ENCODE measurements at regions of chr1 and their contacts with region 1.

Region 1: GRCh38 chr1:247156787-247157232 is 15.0 kb downstream of the ZNF124 start:
- DNase-seq: no peak
- ATAC-seq: no peak
- H3K4me3 ChIP-seq: no peak overlapping the region
- H3K27ac ChIP-seq: no peak overlapping the region
- H3K4me1 ChIP-seq: no peaks in the 10 kb centered on the region
- H3K27me3 ChIP-seq: no peaks in the 10 kb centered on the region
- CTCF ChIP-seq: no peak
- POLR2A ChIP-seq: no peak
- RAD21 ChIP-seq: no peak

Region 2: GRCh38 chr1:246893191-246893939 is 263.4 kb before region 1 on chr1:
- CTCF ChIA-PET with region 1: no interaction called
- POLR2A ChIA-PET with region 1: no interaction called
- RAD21 ChIA-PET with region 1: no interaction called
- intact Hi-C with region 1: no loop called
- DNase-seq: no peak
- ATAC-seq: no peak
- H3K4me3 ChIP-seq: no peak overlapping the region
- H3K27ac ChIP-seq: no peak overlapping the region
- H3K4me1 ChIP-seq: no peaks in the 10 kb centered on the region
- H3K27me3 ChIP-seq: no peaks in the 10 kb centered on the region
- CTCF ChIP-seq: no peak
- POLR2A ChIP-seq: no peak
- RAD21 ChIP-seq: no peak

Region 3: GRCh38 chr1:247060771-247061170 is 96.0 kb before region 1 on chr1:
- CTCF ChIA-PET with region 1: no interaction called
- POLR2A ChIA-PET with region 1: no interaction called
- RAD21 ChIA-PET with region 1: no interaction called
- intact Hi-C with region 1: loop called (anchors 10 kb)
- DNase-seq: no peak
- ATAC-seq: no peak
- H3K4me3 ChIP-seq: no peak overlapping the region
- H3K27ac ChIP-seq: no peak overlapping the region
- H3K4me1 ChIP-seq: no peaks in the 10 kb centered on the region
- H3K27me3 ChIP-seq: no peaks in the 10 kb centered on the region
- CTCF ChIP-seq: no peak
- POLR2A ChIP-seq: no peak
- RAD21 ChIP-seq: no peak

Region 4: DNA sequence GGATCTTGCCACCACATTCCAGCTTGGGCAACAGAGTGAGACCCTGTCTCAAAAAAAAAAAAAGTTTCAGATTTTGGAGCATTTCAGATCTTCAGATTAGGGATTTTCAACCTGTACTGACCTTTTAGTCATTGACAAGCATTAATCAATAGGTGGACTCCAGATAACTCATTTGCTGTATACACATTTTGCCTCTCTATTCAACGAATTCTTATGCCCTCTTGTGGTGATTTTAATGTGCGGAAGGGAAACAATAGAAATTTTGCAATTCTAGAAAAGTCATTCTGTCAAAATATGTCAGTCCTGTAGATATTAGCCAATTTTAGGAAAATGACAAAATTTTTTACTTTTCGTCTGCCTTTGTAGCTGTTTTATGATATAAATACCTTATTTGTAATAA is 419.7 kb after region 1 on chr1:
- CTCF ChIA-PET with region 1: no interaction called
- POLR2A ChIA-PET with region 1: no interaction called
- RAD21 ChIA-PET with region 1: no interaction called
- intact Hi-C with region 1: loop called (anchors 10 kb)
- DNase-seq: peak; percentile 4
- ATAC-seq: no peak
- H3K4me3 ChIP-seq: no peak overlapping the region
- H3K27ac ChIP-seq: no peak overlapping the region
- H3K4me1 ChIP-seq: no peaks in the 10 kb centered on the region
- H3K27me3 ChIP-seq: no peaks in the 10 kb centered on the region
- CTCF ChIP-seq: peak; percentile 29 to 49 (median 38); a peak in 4 of 6 replicates
- POLR2A ChIP-seq: no peak
- RAD21 ChIP-seq: peak; percentile 57